H1 (cell line): ENCODE measurements at regions of chr9 and their contacts with region 1.

Region 1: DNA sequence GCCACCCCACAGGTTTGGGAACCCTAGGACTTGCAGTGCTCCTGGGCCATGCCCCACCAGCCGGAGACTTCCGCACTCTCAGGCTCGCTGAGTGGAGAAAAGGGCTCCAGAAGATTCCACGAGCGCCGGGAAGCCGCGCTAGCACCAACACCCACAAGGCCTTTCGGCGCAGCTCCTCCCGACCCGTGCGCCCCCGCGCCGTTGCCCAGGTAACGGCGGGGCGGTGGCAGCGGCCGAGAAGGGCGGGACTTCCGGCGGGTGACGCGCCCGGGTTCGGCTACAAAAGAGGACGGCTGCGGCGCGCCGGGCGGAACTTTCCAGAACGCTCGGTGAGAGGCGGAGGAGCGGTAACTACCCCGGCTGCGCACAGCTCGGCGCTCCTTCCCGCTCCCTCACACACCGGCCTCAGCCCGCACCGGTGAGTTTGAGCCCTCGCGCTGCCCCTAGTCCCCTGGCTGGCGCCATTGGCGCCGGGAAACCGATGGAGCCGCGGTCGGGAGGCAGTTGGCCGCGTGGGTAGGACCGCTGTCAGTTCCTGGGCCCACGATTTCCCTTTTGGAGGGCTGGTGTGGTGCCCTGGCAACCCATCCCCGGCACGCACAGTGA is at the start of gene DNAJA1:
- DNase-seq: peak; percentile 60 to 96
- H3K4me3 ChIP-seq: peak within 1 kb of the TSS; percentile 95 to 99 (median 98)
- H3K27ac ChIP-seq: peak within 1 kb of the TSS; percentile 94
- H3K4me1 ChIP-seq: peaks cover 0 to 8% (median 3%) of the 10 kb centered on the region in 4 experiments; a peak in 4 of 7 replicates
- H3K27me3 ChIP-seq: no peaks in the 10 kb centered on the region
- CTCF ChIP-seq: no peak
- EP300 ChIP-seq: no peak
- POLR2A ChIP-seq: peak; percentile 99
- RAD21 ChIP-seq: no peak
- total RNA-seq, gene DNAJA1: 159 and 169 TPM in 2 replicates

Region 2: GRCh38 chr9:33044127-33044673 is 19.1 kb after region 1 on chr9:
- CTCF ChIA-PET with region 1: interaction called, 5 read pairs
- POLR2A ChIA-PET with region 1: interaction called, 84 read pairs
- DNase-seq: peak; percentile 38 to 83
- H3K4me3 ChIP-seq: peak overlapping the region; percentile 37 to 61 (median 44)
- H3K27ac ChIP-seq: no peak overlapping the region
- H3K4me1 ChIP-seq: peaks cover 0 to 8% (median 3%) of the 10 kb centered on the region in 4 experiments; a peak in 4 of 7 replicates
- H3K27me3 ChIP-seq: no peaks in the 10 kb centered on the region
- CTCF ChIP-seq: no peak
- EP300 ChIP-seq: no peak
- POLR2A ChIP-seq: peak in 1 of 2 experiments; percentile 13; a peak in 2 of 3 replicates
- RAD21 ChIP-seq: no peak

Region 3: DNA sequence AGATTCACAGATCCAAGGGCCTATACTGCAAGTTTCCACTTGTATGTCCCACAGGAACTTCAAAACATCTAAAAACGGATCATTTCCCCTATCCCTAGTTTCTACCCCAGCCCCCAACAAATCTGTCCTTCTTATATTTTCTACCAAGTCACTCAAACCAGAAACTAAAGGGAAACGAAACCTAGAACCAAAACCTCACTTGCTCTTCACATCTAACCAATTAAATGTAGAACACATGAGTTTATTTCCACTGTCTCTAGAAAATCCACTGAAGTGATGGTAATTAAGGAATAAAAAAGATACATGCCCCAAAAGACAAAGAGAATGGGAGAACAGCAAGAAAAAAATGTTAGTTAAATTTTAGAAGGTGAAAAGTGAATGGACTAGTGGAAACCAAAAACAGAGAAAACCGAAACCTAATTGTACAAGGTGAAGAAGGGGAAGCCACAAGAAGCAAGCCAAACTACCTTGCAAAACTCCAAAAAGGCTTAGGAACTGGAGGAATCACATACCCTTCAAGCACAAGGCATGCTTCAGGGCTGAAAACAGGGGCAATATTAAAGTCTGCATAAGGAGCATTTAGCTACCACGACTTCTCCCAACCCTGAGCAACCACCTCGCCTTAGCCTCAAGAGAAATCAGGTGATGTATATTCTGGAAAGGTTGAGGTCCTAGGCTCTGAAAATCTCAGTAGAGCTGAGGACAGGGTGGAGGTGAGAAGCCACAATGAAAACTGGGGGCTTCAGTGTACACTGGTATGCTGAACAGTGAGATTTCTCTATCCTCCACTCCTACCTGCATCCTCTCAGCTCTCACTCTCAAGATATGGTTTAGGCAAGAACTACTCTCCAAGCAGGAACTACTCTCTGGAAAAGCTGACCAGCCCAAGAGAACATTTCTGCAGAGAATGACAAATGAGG is 40.3 kb after region 1 on chr9:
- CTCF ChIA-PET with region 1: no interaction called
- POLR2A ChIA-PET with region 1: interaction called, 14 read pairs
- DNase-seq: no peak
- H3K4me3 ChIP-seq: no peak overlapping the region
- H3K27ac ChIP-seq: no peak overlapping the region
- H3K4me1 ChIP-seq: no peaks in the 10 kb centered on the region
- H3K27me3 ChIP-seq: no peaks in the 10 kb centered on the region
- CTCF ChIP-seq: no peak
- EP300 ChIP-seq: no peak
- POLR2A ChIP-seq: no peak
- RAD21 ChIP-seq: no peak

Region 4: GRCh38 chr9:33125871-33126822 is 101.1 kb after region 1 on chr9:
- CTCF ChIA-PET with region 1: no interaction called
- POLR2A ChIA-PET with region 1: interaction called, 14 read pairs
- DNase-seq: no peak
- H3K4me3 ChIP-seq: no peak overlapping the region
- H3K27ac ChIP-seq: no peak overlapping the region
- H3K4me1 ChIP-seq: peaks cover 0 to 3% (median 0%) of the 10 kb centered on the region in 4 experiments; a peak in 1 of 7 replicates
- H3K27me3 ChIP-seq: no peaks in the 10 kb centered on the region
- CTCF ChIP-seq: no peak
- EP300 ChIP-seq: no peak
- POLR2A ChIP-seq: no peak
- RAD21 ChIP-seq: no peak

Region 5: GRCh38 chr9:33290247-33291030 is 265.4 kb after region 1 on chr9 and contains the start of gene NFX1:
- CTCF ChIA-PET with region 1: no interaction called
- POLR2A ChIA-PET with region 1: interaction called, 17 read pairs
- DNase-seq: peak; percentile 85 to 96
- H3K4me3 ChIP-seq: peak within 1 kb of the TSS; percentile 84 to 97 (median 90)
- H3K27ac ChIP-seq: peak within 1 kb of the TSS; percentile 99
- H3K4me1 ChIP-seq: peaks cover 0 to 8% (median 2%) of the 10 kb centered on the region in 4 experiments; a peak in 3 of 7 replicates
- H3K27me3 ChIP-seq: no peaks in the 10 kb centered on the region
- CTCF ChIP-seq: no peak
- EP300 ChIP-seq: no peak
- POLR2A ChIP-seq: peak; percentile 95 to 96
- RAD21 ChIP-seq: no peak
- total RNA-seq, gene NFX1: 26.1 and 28.4 TPM in 2 replicates